Mucosa of descending colon (tissue), 3 donors: ENCODE measurements at regions of chr22 and their contacts with region 1.

Region 1: GRCh38 chr22:44735540-44736488 is 16.6 kb upstream of the ARHGAP8 start:
- DNase-seq: peak; percentile 81 to 94 (median 89)
- ATAC-seq: peak; percentile 72
- H3K4me3 ChIP-seq: no peak overlapping the region
- H3K4me1 ChIP-seq: peaks cover 6% of the 10 kb centered on the region
- CTCF ChIP-seq: peak; percentile 99

Region 2: GRCh38 chr22:44697423-44698141 is 38.2 kb before region 1 on chr22:
- intact Hi-C with region 1: loop called (anchors 2 to 5 kb)
- DNase-seq: peak; percentile 84 to 93 (median 91)
- ATAC-seq: peak; percentile 60
- H3K4me3 ChIP-seq: no peak overlapping the region
- H3K4me1 ChIP-seq: no peaks in the 10 kb centered on the region
- CTCF ChIP-seq: peak; percentile 87

Region 3: DNA sequence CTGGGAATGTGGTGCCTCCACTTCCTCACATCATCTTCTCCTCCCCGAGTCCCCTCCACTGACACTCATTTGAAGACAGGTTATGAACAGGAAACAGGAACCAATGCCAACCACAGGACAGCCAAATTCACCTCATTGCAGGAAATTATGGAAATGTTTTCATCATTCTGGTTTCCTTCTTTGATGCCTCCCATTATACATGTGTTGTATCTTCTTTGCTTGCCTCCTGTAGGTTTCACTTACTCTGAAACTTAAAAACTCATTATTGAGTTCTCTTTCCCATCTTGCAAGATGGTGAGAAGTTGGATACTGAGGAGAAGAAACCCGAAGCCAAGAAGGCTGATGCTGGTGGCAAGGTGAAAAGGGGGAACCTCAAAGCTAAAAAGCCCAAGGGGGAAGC is 165.5 kb after region 1 on chr22:
- intact Hi-C with region 1: no loop called
- DNase-seq: no peak
- ATAC-seq: no peak
- H3K4me3 ChIP-seq: no peak overlapping the region
- H3K4me1 ChIP-seq: no peaks in the 10 kb centered on the region
- CTCF ChIP-seq: no peak